Activated naive CD4-positive, alpha-beta T cell treated with anti-CD3 and anti-CD28 coated beads for 36 hours (primary cell): ENCODE measurements at regions of chr19 and their contacts with region 1.

Region 1: DNA sequence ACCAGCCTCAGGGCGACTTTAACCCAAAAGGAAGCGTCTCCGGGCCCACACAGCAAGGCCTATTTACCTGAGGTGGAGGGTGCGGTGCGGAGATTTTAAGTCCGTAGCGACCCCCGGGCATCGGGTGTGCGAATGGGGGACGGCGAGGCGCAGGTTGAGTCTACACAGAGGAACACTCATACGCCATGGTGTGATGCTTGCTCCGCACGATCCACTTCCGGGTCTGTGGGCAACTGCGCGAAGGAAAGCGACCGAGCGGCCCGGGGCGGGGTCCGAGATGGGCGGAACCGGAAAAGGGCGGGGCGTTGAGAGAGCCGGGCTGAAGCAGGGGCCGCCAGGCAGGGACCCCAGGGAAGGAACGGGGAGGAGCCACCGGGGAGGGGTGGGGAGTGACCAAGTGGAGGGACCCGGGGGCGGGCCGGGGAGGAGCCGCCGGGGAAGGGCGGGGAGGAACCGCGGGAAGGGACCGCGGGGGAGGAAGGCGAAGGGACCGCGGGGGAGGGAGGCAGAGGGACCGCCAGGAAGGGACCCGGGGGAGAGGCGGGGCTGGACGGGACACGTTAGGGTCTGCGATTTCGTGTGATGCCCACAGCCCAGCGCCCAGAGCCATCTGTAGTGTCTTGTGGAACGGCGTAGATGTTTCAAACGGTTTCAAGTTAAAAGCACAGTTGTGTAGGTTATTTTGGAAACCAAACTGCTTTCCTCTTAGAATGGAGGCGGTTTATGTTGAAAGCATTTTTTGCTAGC is at the start of gene ZNF160:
- DNase-seq: peak; percentile 99
- H3K4me3 Mint-ChIP-seq: peak within 1 kb of the TSS; percentile 82
- H3K27ac Mint-ChIP-seq: peak within 1 kb of the TSS; percentile 84
- H3K4me1 Mint-ChIP-seq: peaks cover 22% of the 10 kb centered on the region
- H3K27me3 Mint-ChIP-seq: no peaks in the 10 kb centered on the region
- total RNA-seq, gene ZNF160: 23.5 to 25.2 TPM

Region 2: DNA sequence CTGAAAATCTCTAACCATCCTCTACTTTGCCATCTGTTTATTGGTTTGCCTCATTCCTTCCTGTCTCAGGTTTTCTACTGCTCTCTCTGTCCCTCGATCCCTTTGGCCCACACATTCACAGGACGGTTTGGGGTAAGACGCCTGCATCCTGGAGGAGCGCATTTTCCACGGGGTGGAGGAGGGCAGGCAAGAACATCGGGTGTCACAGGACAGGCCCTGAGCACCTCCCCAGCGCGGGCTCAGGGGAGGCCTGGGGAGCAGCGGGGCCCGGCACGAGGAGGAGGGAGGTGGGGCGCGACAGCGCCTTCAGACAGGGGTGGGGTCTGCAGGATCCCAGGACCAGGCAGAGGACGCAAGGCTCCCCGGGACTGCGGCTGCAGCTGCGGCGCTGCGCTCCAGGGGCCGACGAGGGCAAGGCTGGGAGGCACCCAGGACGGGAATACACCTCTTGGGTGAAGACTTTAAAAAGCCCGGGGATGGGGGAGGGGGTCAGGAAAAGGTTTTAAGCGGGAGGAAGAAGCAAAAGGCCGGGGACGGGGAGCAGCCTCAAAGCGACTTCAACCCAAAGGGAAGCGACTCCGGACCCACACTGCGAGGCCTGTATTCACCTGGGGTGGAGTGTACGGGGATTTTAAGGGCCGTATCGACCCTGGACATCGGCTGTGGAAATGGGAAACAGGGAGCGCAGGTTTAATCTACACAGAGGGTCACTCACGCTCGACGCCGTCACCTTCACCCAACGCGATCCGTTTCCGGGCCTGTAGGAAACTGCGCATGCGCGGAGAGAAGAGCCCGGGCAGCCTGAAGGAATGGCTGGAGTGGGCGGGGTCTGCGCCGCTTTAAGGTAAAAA is 29.0 kb after region 1 on chr19 and contains the start of gene ZNF415:
- CTCF ChIA-PET with region 1: no interaction called
- intact Hi-C with region 1: loop called (anchors 2 kb)
- DNase-seq: peak; percentile 63
- H3K4me3 Mint-ChIP-seq: peak within 1 kb of the TSS; percentile 62
- H3K27ac Mint-ChIP-seq: no peak within 1 kb of the TSS
- H3K4me1 Mint-ChIP-seq: peaks cover 9% of the 10 kb centered on the region
- H3K27me3 Mint-ChIP-seq: peaks cover 13% of the 10 kb centered on the region
- total RNA-seq, gene ZNF415: 0.74 to 1.0 TPM

Region 3: DNA sequence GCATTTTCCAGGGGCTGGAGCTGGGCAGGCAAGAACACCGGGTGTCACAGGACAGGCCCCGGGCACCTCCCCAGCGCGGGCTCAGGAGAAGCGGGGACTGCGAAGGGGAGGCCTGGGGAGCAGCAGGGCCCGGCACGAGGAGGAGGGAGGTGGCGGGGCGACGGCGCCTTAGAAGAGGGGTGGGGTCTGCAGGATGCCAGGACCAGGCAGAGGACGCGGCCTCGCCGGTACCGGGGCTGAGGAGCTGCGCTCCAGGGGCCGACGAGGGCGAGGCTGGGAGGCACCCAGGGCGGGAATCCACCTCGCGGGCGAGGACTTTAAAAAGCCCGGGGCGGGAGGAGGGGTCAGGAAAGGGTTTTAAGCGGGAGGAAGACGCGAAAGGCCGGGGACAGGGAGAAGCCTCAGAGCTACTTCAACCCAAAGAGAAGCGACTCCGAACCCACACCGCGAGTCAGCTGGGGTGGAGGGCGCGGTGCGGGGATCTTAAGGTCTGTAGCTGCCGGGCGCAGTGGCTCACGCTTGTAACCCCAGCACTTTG is 54.8 kb after region 1 on chr19:
- CTCF ChIA-PET with region 1: interaction called, 3 read pairs
- intact Hi-C with region 1: loop called (anchors 2 kb)
- DNase-seq: peak; percentile 60
- H3K4me3 Mint-ChIP-seq: peak overlapping the region; percentile 85
- H3K27ac Mint-ChIP-seq: peak overlapping the region; percentile 72
- H3K4me1 Mint-ChIP-seq: peaks cover 13% of the 10 kb centered on the region
- H3K27me3 Mint-ChIP-seq: no peaks in the 10 kb centered on the region